Lower leg skin (tissue), 4 donors: ENCODE measurements at regions of chr10 and their contacts with region 1.

Region 1: DNA sequence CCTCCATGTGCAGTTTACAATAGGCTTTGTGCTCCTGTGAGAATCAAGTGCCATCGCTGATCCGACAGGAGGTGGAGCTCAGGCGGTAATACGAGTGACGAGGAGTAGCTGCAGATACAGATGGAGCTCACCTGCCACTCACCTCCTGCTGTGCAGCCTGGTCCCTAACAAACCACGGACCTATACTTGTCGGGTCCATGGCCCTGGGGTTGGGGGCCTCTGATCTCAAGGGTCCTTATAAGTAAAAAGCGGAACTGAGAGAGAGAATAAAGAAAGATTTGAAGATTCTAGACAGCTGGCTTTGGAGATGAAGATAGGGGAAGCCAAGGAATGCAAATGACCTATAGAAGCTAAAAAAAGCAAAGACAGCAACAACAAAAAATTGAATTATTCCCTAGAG is 130.6 kb downstream of the PLXDC2 start:
- DNase-seq: no peak
- H3K4me3 ChIP-seq: no peak overlapping the region
- CTCF ChIP-seq: no peak
- POLR2A ChIP-seq: no peak

Region 2: GRCh38 chr10:19862811-19863515 is 83.8 kb before region 1 on chr10:
- intact Hi-C with region 1: no loop called
- DNase-seq: no peak
- H3K4me3 ChIP-seq: no peak overlapping the region
- CTCF ChIP-seq: no peak
- POLR2A ChIP-seq: no peak

Region 3: DNA sequence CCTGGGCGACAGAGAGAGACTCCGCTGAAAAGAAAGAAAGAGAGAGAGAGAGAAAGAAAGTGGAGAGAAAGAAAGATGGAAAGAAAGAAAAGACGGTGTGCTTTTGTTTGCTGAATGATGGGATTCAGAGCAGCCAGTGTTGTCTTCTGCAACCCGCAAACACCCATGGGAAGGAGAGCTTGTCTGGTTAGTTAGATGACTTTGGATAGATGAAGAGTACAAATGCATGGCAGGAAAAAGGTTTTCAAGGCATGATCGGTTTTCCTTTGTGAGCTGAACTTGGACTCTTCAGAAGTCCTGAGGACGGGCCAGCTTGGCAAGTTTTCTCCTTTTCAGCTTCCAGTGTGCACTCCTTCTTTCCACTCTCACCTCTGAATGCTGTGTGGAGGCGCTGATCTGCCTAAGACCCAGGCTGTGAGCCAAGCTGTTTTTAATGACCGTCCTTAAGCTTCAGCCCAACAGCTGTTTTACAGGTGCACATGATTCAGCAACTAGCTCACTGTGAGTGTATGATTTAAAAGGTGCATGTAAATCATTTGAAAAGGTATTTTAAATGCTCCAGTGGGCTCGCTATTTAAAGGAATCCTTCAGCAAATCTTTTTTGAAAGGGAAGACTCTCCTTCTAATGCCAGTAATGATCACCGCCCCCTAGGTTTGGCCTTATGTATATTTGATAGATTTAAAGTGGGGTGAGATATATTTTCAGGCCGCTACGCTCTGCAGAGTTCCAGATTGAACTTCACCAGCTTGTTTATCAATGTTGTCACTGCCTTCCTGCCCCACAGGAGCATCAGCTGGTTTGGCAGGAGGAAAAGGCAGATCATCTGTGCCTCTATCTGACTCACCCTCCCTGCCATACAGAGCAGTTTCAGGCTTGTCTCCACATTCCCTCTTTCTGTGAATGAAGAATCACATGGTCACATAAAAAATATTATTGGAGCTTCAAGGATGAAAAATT is 15.6 kb before region 1 on chr10:
- intact Hi-C with region 1: loop called (anchors 1 kb)
- DNase-seq: peak in 1 of 2 donors; percentile 70
- H3K4me3 ChIP-seq: no peak overlapping the region
- CTCF ChIP-seq: no peak
- POLR2A ChIP-seq: no peak